Heart right ventricle (tissue), 16 donors: ENCODE measurements at regions of chr20 and their contacts with region 1.

Region 1: DNA sequence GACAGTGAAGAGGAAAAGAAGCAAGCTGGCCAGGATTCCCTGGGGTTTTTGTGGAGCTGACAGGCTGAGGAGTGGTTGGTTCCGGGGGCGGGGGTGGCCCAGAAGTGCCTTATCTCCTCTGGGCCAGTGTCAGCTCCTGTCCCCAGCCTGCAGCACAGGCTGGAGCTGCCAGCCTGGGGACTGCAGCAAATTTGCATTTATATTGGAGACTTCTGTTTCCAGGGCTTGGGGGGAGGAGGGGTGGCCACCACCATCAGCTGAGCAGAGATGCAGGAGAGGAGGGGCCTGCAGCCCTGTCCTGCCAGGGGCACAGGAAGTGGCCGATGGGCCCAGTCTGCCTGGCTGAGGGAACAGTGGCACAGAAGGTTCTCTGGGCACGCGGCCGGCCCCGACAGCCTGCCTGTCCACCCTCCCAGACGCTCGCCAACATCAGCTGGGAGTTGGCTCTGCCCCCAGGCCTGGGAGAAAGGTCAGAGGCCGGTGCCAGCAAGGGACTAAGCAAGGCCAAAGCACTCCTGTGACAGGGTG is 24.3 kb upstream of the SCRT2 start:
- DNase-seq: peak; percentile 69 to 83
- ATAC-seq: peak; percentile 85 to 97 (median 94)
- H3K4me3 ChIP-seq: no peak overlapping the region
- H3K27ac ChIP-seq: peak overlapping the region; percentile 12 to 82 (median 74)
- H3K4me1 ChIP-seq: peaks cover 0 to 23% (median 6%) of the 10 kb centered on the region in 9 donors
- H3K27me3 ChIP-seq: peaks cover 0 to 8% (median 0%) of the 10 kb centered on the region in 7 donors
- CTCF ChIP-seq: no peak

Region 2: GRCh38 chr20:595330-596308 is 104.3 kb before region 1 on chr20:
- intact Hi-C with region 1: no loop called
- DNase-seq: peak; percentile 86 to 91
- ATAC-seq: peak; percentile 61 to 94 (median 89)
- H3K4me3 ChIP-seq: peak overlapping the region in 2 of 10 donors; percentile 24 to 26
- H3K27ac ChIP-seq: peak overlapping the region; percentile 62 to 88 (median 84)
- H3K4me1 ChIP-seq: peaks cover 0 to 53% (median 25%) of the 10 kb centered on the region in 9 donors
- H3K27me3 ChIP-seq: no peaks in the 10 kb centered on the region
- CTCF ChIP-seq: peak in 5 of 9 donors; percentile 8 to 63 (median 31)

Region 3: DNA sequence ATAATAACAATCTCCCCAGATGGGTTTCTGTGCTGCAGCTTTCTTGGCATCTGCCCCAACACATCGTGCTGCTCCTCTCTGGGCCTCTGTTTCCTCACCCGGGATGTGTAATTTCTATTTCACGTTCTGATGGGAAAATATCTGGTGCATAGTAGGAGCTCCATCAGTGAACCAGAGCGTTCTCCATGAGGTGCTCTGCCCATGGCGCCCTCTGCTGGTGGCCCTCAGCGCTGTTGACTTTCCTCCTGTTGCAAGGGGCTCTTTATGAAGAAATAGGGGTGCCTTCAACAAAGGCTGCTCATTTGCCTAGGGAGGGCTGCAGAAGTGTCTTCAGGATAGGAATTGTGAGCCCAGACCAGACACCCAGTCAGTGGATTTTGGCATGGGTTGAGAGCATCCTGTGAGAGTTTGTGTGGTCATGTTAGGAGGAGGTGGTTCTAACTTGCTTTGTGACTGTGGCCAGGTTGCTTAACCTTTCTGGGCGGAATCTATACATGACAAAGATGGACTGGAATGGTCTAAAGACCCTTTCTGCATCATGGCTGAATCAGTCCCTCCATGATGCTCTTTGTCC is 32.4 kb before region 1 on chr20:
- intact Hi-C with region 1: loop called in 1 of 10 experiments (anchors 5 kb)
- DNase-seq: peak; percentile 67 to 75
- ATAC-seq: peak in 4 of 8 donors; percentile 3 to 65 (median 50)
- H3K4me3 ChIP-seq: no peak overlapping the region
- H3K27ac ChIP-seq: peak overlapping the region in 8 of 10 donors; percentile 31 to 79 (median 46)
- H3K4me1 ChIP-seq: peaks cover 5 to 45% (median 16%) of the 10 kb centered on the region in 9 donors
- H3K27me3 ChIP-seq: peaks cover 16 to 70% (median 49%) of the 10 kb centered on the region in 7 donors
- CTCF ChIP-seq: peak; percentile 52 to 95 (median 80)

Region 4: DNA sequence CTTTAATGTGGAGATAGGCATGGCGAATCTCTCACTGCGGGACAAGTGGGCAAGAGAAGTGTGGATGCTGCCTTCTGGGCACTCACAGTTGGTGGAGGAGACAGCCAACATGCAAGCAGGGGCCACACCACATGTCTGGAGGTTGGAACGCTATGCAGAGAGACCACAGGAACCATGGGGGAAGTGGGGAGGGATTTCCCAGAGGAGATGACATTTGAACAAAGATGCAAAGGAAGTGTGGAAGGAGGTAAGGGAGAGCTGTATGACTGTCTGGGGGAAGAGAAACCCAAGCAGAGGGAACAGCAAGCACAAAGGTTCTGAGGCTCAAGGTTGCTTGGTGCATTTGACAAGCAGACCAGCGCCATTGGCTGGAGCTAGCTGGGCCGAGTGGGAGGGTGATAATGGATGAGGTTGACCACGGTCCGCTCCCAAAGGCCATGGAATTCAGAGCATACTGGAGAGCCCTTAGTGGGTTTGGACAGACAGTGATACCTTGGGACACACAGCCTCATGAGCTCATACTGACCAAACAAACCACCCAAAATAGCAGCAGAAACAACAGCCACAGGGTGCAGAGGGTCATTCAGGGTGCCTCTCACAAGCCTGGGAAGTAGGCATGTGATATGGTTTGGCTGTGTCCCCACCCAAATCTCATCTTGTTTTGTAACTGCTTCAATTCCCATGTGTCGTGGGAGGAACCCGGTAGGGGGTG is 126.0 kb after region 1 on chr20:
- intact Hi-C with region 1: no loop called
- DNase-seq: no peak
- ATAC-seq: peak in 1 of 8 donors; percentile 19
- H3K4me3 ChIP-seq: no peak overlapping the region
- H3K27ac ChIP-seq: no peak overlapping the region
- H3K4me1 ChIP-seq: peaks cover 0 to 24% (median 5%) of the 10 kb centered on the region in 9 donors
- H3K27me3 ChIP-seq: no peaks in the 10 kb centered on the region
- CTCF ChIP-seq: no peak